Activated CD4-positive, alpha-beta memory T cell treated with anti-CD3 and anti-CD28 coated beads, Interleukin-2, amount 10 ng/mL, durations not matched to agents 7 days and 5 days (primary cell): ENCODE measurements at regions of chr11 and their contacts with region 1.

Region 1: DNA sequence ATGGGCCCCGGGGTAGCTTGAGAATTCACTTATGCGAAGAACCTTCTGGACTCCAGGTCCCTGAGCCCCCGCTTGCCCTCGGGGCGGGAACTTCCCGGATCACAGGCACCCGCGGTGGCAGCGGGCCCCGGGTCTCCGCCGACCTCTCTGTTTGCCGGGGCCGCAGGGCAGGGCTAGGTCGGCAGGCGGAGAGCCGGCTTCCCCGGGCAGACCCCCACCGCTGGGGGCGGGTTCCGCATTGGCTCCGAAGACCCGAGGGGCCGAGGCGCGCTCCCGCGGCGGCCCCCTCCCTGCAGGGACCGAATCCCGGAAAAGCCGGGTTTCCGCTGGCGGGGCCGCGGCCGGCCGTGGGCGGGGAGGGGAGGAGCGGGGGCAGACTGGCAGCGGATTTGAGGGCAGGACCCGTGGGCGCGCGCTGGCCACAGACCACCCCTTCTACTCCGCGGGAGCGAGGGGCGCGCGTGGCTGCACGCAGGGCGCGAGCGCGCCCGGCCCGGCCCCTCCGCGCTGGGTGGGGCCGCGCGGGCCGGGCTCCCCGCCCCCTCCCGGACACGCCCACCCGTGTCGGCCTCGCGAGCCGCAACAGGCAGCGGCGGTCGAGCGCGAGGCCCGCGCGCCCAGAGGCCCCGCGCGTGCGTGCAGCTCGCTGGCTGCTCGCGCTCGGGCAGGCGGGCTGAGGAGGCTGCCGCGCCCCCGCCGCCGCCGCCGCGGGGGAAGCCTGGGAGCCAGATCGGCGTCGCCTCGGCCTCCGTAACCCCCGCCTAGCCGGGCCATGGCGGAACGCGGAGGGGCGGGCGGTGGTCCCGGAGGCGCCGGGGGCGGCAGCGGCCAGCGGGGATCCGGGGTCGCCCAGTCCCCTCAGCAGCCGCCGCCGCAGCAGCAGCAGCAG is at the start of gene PACS1:
- DNase-seq: peak; percentile 82
- H3K4me3 Mint-ChIP-seq: peak within 1 kb of the TSS; percentile 92
- H3K27ac Mint-ChIP-seq: peak within 1 kb of the TSS; percentile 93
- H3K4me1 Mint-ChIP-seq: peaks cover 63% of the 10 kb centered on the region
- H3K27me3 Mint-ChIP-seq: no peaks in the 10 kb centered on the region
- total RNA-seq, gene PACS1: 86.4 to 95.0 TPM

Region 2: GRCh38 chr11:66015454-66015881 is 54.5 kb before region 1 on chr11:
- CTCF ChIA-PET with region 1: no interaction called
- POLR2A ChIA-PET with region 1: no interaction called
- DNase-seq: no peak
- H3K4me3 Mint-ChIP-seq: no peak overlapping the region
- H3K27ac Mint-ChIP-seq: no peak overlapping the region
- H3K4me1 Mint-ChIP-seq: peaks cover 3% of the 10 kb centered on the region
- H3K27me3 Mint-ChIP-seq: peaks cover 21% of the 10 kb centered on the region

Region 3: GRCh38 chr11:66051766-66052663 is 17.9 kb before region 1 on chr11 and contains the start of gene SF3B2:
- CTCF ChIA-PET with region 1: interaction called, 40 read pairs
- POLR2A ChIA-PET with region 1: interaction called, 103 read pairs
- DNase-seq: peak; percentile 98
- H3K4me3 Mint-ChIP-seq: peak within 1 kb of the TSS; percentile 100
- H3K27ac Mint-ChIP-seq: peak within 1 kb of the TSS; percentile 96
- H3K4me1 Mint-ChIP-seq: peaks cover 37% of the 10 kb centered on the region
- H3K27me3 Mint-ChIP-seq: peaks cover 2% of the 10 kb centered on the region
- total RNA-seq, gene SF3B2: 230 to 241 TPM

Region 4: GRCh38 chr11:66100272-66101065 is 30.5 kb after region 1 on chr11:
- CTCF ChIA-PET with region 1: interaction called, 4 read pairs
- POLR2A ChIA-PET with region 1: interaction called, 13 read pairs
- DNase-seq: peak; percentile 76
- H3K4me3 Mint-ChIP-seq: peak overlapping the region; percentile 60
- H3K27ac Mint-ChIP-seq: peak overlapping the region; percentile 87
- H3K4me1 Mint-ChIP-seq: peaks cover 39% of the 10 kb centered on the region
- H3K27me3 Mint-ChIP-seq: no peaks in the 10 kb centered on the region

Region 5: GRCh38 chr11:66126808-66127555 is 57.0 kb after region 1 on chr11:
- CTCF ChIA-PET with region 1: interaction called, 17 read pairs
- POLR2A ChIA-PET with region 1: interaction called, 11 read pairs
- DNase-seq: peak; percentile 62
- H3K4me3 Mint-ChIP-seq: peak overlapping the region; percentile 35
- H3K27ac Mint-ChIP-seq: peak overlapping the region; percentile 82
- H3K4me1 Mint-ChIP-seq: peaks cover 52% of the 10 kb centered on the region
- H3K27me3 Mint-ChIP-seq: no peaks in the 10 kb centered on the region